Heart left ventricle (tissue), 16 donors: ENCODE measurements at regions of chr14 and their contacts with region 1.

Region 1: GRCh38 chr14:23034483-23035302 is at the start of gene PSMB5:
- DNase-seq: peak; percentile 90 to 93 (median 91)
- ATAC-seq: peak; percentile 97 to 99 (median 98)
- H3K4me3 ChIP-seq: peak within 1 kb of the TSS; percentile 65 to 98 (median 90)
- H3K27ac ChIP-seq: peak within 1 kb of the TSS; percentile 81 to 98 (median 96)
- H3K4me1 ChIP-seq: peaks cover 0 to 23% (median 15%) of the 10 kb centered on the region in 12 donors
- H3K27me3 ChIP-seq: no peaks in the 10 kb centered on the region
- CTCF ChIP-seq: peak in 1 of 12 donors; percentile 3
- POLR2A ChIP-seq: peak in 1 of 2 donors; percentile 44
- total RNA-seq, gene PSMB5: 113 to 186 (median 122) TPM

Region 2: GRCh38 chr14:22986508-22987054 is 48.1 kb before region 1 on chr14:
- intact Hi-C with region 1: no loop called
- DNase-seq: peak; percentile 82 to 88 (median 87)
- ATAC-seq: peak; percentile 35 to 52 (median 40)
- H3K4me3 ChIP-seq: no peak overlapping the region
- H3K27ac ChIP-seq: no peak overlapping the region
- H3K4me1 ChIP-seq: peaks cover 0 to 19% (median 8%) of the 10 kb centered on the region in 12 donors
- H3K27me3 ChIP-seq: peaks cover 0 to 8% (median 0%) of the 10 kb centered on the region in 9 donors
- CTCF ChIP-seq: peak; percentile 85 to 95 (median 92)
- POLR2A ChIP-seq: no peak

Region 3: GRCh38 chr14:23006544-23007419 is 27.9 kb before region 1 on chr14:
- intact Hi-C with region 1: loop called in 5 of 10 experiments (anchors 2 kb)
- DNase-seq: peak; percentile 97 to 98 (median 98)
- ATAC-seq: peak; percentile 99
- H3K4me3 ChIP-seq: peak overlapping the region; percentile 45 to 98 (median 74)
- H3K27ac ChIP-seq: peak overlapping the region; percentile 90 to 99 (median 96)
- H3K4me1 ChIP-seq: peaks cover 0 to 36% (median 17%) of the 10 kb centered on the region in 12 donors
- H3K27me3 ChIP-seq: no peaks in the 10 kb centered on the region
- CTCF ChIP-seq: peak in 6 of 12 donors; percentile 14 to 50 (median 30)
- POLR2A ChIP-seq: peak in 1 of 2 donors; percentile 92

Region 4: GRCh38 chr14:23446291-23446851 is 411.7 kb after region 1 on chr14:
- intact Hi-C with region 1: no loop called
- DNase-seq: no peak
- ATAC-seq: peak; percentile 10 to 47 (median 30)
- H3K4me3 ChIP-seq: no peak overlapping the region
- H3K27ac ChIP-seq: peak overlapping the region in 8 of 12 donors; percentile 6 to 97 (median 72)
- H3K4me1 ChIP-seq: peaks cover 0 to 41% (median 15%) of the 10 kb centered on the region in 12 donors
- H3K27me3 ChIP-seq: peaks cover 0 to 6% (median 0%) of the 10 kb centered on the region in 9 donors
- CTCF ChIP-seq: peak in 7 of 12 donors; percentile 21 to 51 (median 38)
- POLR2A ChIP-seq: no peak